Activated CD4-positive, alpha-beta memory T cell treated with anti-CD3 and anti-CD28 coated beads for 36 hours (primary cell): ENCODE measurements at regions of chr13 and their contacts with region 1.

Region 1: GRCh38 chr13:74115138-74115537 is 19.1 kb downstream of the KLF12 start:
- DNase-seq: no peak
- H3K4me3 Mint-ChIP-seq: no peak overlapping the region
- H3K27ac Mint-ChIP-seq: no peak overlapping the region
- H3K4me1 Mint-ChIP-seq: peaks cover 81% of the 10 kb centered on the region
- H3K27me3 Mint-ChIP-seq: no peaks in the 10 kb centered on the region

Region 2: GRCh38 chr13:74104661-74105275 is 10.4 kb before region 1 on chr13:
- CTCF ChIA-PET with region 1: no interaction called
- POLR2A ChIA-PET with region 1: no interaction called
- intact Hi-C with region 1: loop called (anchors 1 kb)
- DNase-seq: no peak
- H3K4me3 Mint-ChIP-seq: no peak overlapping the region
- H3K27ac Mint-ChIP-seq: peak overlapping the region; percentile 44
- H3K4me1 Mint-ChIP-seq: peaks cover 62% of the 10 kb centered on the region
- H3K27me3 Mint-ChIP-seq: no peaks in the 10 kb centered on the region